Calu3 (cell line): ENCODE measurements at regions of chr13 and their contacts with region 1.

Region 1: DNA sequence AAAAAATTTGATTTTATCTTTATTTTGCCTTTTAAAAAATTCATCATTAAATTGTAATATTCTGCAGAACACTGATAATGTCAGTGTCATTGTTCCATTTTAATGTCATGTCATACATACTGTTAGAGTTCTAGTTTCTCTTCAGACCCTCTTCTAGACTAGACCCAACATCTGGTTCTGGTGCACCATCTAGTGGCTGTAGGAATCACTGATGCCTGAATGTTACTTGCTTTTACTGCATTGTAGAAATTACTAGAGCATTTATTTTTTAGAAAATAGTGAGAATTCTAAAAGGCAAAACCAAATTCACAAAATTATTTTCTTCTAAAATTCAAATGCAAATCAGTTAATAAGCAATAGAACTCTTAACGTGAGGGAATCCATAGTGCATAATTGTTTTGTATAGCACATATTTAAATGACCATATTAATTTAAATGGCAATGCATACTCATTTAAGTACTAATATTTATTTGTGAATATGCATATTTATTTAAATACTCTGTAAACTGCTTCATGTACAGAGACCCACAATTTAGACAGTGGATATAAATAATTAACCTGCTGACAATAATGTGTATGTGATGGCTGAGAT is 425.7 kb downstream of the KLF12 start:
- DNase-seq: peak; percentile 34
- H3K4me3 Mint-ChIP-seq: no peak overlapping the region
- H3K27ac Mint-ChIP-seq: no peak overlapping the region
- H3K4me1 Mint-ChIP-seq: peaks cover 12% of the 10 kb centered on the region
- H3K27me3 Mint-ChIP-seq: no peaks in the 10 kb centered on the region
- CTCF ChIP-seq: peak; percentile 32

Region 2: DNA sequence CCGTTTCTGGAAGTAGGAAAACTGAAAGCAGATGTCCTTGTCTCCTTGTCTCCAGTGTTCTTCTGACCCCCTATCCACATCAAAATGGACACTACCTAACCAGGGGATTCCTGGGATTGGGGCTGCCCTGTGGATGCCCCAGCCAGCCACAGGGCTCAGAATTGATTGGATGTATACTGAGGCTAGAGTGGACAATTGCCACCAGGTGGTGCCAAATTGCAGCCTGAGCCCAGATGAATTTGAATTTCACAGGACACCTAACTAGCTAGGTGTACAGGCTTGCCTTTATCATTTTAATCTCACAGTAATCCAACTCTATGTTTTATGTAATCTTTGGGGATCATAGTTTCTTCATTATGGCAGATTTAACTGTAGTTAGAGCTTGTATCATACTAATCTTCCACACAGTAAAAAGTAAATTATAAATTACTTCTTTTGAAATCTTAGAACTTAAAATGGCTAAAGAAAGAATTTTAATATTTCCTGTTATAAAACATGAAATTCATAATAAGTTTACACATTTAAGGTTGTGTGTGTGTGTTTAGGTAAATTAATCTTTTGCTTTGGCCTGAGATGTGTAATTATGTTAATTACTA is 868.6 kb before region 1 on chr13:
- CTCF ChIA-PET with region 1: no interaction called
- intact Hi-C with region 1: loop called (anchors 5 kb)
- DNase-seq: peak; percentile 44
- H3K4me3 Mint-ChIP-seq: no peak overlapping the region
- H3K27ac Mint-ChIP-seq: no peak overlapping the region
- H3K4me1 Mint-ChIP-seq: peaks cover 9% of the 10 kb centered on the region
- H3K27me3 Mint-ChIP-seq: no peaks in the 10 kb centered on the region
- CTCF ChIP-seq: peak; percentile 19

Region 3: GRCh38 chr13:73119612-73120011 is 588.9 kb before region 1 on chr13:
- CTCF ChIA-PET with region 1: no interaction called
- intact Hi-C with region 1: no loop called
- DNase-seq: no peak
- H3K4me3 Mint-ChIP-seq: no peak overlapping the region
- H3K27ac Mint-ChIP-seq: no peak overlapping the region
- H3K4me1 Mint-ChIP-seq: no peaks in the 10 kb centered on the region
- H3K27me3 Mint-ChIP-seq: no peaks in the 10 kb centered on the region
- CTCF ChIP-seq: no peak

Region 4: DNA sequence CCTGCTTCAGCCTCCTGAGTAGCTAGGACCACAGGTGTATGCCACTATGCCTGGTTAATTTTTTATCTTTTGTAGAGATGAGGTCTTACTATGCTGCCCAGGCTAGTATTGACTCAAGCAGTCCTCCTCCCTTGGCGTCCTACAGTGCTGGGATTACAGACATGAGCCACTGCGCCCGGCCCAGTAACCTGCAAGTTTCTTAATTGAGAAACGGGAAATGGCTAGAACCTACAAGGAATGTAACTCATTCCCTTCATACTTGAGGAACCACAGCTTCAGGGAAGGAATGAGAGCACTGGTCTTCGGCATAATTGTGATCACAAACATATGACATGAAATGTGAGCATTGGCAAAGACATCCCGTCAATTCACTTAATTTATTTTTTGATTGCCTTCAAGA is 492.7 kb before region 1 on chr13:
- CTCF ChIA-PET with region 1: no interaction called
- intact Hi-C with region 1: loop called (anchors 10 kb)
- DNase-seq: peak; percentile 55
- H3K4me3 Mint-ChIP-seq: peak overlapping the region; percentile 14
- H3K27ac Mint-ChIP-seq: peak overlapping the region; percentile 79
- H3K4me1 Mint-ChIP-seq: peaks cover 24% of the 10 kb centered on the region
- H3K27me3 Mint-ChIP-seq: no peaks in the 10 kb centered on the region
- CTCF ChIP-seq: no peak

Region 5: DNA sequence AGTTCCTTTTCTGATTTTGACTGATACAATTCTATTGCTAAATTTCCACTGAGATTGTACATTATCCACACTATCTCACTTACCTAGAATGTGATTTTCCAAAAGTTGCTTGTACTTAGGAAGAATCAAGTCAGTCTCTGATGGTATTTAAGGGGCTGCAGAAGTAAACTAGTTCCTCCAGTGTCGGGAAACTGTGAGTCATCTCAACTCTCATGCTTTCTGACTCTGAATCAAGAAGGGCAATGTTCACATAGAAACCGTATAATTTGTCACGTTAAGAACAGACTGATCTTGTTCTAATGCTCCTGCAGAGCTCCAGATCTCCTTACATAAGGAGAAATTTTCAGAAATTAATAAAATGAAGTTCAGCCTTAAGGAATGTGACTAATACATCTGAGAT is 280.4 kb before region 1 on chr13:
- CTCF ChIA-PET with region 1: no interaction called
- intact Hi-C with region 1: loop called (anchors 2 kb)
- DNase-seq: peak; percentile 16
- H3K4me3 Mint-ChIP-seq: no peak overlapping the region
- H3K27ac Mint-ChIP-seq: peak overlapping the region; percentile 90
- H3K4me1 Mint-ChIP-seq: peaks cover 33% of the 10 kb centered on the region
- H3K27me3 Mint-ChIP-seq: no peaks in the 10 kb centered on the region
- CTCF ChIP-seq: no peak

Region 6: GRCh38 chr13:73610799-73611592 is 97.5 kb before region 1 on chr13:
- CTCF ChIA-PET with region 1: no interaction called
- intact Hi-C with region 1: loop called (anchors 2 kb)
- DNase-seq: peak; percentile 10
- H3K4me3 Mint-ChIP-seq: no peak overlapping the region
- H3K27ac Mint-ChIP-seq: no peak overlapping the region
- H3K4me1 Mint-ChIP-seq: no peaks in the 10 kb centered on the region
- H3K27me3 Mint-ChIP-seq: no peaks in the 10 kb centered on the region
- CTCF ChIP-seq: no peak